PC-9 (cell line): ENCODE measurements at regions of chr22 and their contacts with region 1.

Region 1: GRCh38 chr22:30253205-30253852 is 6.8 kb upstream of the LIF start:
- DNase-seq: peak; percentile 73 to 89
- H3K4me3 ChIP-seq: peak overlapping the region; percentile 90; the same call in 1 of the 2 replicates
- H3K27ac ChIP-seq: peak overlapping the region; percentile 100
- H3K4me1 ChIP-seq: peaks cover 75% of the 10 kb centered on the region
- H3K27me3 ChIP-seq: no peaks in the 10 kb centered on the region
- CTCF ChIP-seq: no peak

Region 2: DNA sequence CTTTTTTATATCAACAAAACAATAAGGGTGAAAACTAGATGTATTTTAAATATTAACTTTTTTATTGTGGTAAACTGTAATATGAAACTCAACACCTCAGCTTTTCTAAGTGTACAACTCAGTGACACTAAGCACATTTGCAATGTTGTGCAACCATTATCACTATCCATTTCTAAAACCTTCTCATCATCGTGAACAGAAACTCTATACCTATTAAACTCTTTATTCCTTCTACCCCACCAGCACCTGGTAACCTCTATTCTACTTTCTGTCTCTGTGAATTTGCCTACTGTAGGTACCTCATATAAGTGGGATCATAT is 163.7 kb before region 1 on chr22:
- CTCF ChIA-PET with region 1: interaction called, 10 read pairs
- POLR2A ChIA-PET with region 1: no interaction called
- intact Hi-C with region 1: no loop called
- DNase-seq: no peak
- H3K4me3 ChIP-seq: no peak overlapping the region
- H3K27ac ChIP-seq: peak overlapping the region; percentile 38
- H3K4me1 ChIP-seq: peaks cover 31% of the 10 kb centered on the region
- H3K27me3 ChIP-seq: no peaks in the 10 kb centered on the region
- CTCF ChIP-seq: no peak

Region 3: DNA sequence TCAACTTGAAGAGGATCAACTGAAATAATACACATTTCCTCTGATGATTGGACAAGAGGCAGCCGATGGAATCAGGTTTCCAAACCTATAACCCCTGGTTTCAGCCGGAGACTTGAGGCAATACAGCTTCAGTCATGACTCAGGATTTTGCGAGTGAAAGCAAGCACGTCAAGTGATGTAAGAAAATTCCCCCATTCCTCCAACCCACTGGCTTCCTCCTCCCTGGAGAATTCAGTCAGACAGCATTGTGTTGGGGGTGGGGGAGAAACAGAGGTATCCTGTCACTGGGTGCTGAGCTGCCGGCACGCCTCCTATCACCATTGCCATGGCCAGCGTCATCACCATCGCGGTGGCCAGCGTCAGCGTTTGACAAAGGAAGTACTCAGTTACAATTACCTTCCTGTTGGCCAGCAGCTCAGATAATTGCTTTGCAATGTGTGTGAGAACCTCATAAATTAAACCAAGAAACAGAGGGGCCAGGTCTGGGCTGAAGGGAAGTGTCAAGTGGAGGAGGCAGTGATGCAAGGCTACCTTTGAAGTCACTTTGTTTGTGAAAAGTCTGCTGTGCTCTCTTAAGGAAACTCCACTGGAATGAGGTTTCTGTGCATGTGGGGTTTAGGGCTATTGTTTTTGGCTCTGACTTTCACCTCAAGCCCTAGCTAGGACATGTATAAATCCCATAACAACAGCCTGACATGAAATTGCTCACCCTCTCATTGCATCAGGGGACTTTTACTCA is 57.0 kb before region 1 on chr22:
- CTCF ChIA-PET with region 1: interaction called, 9 read pairs
- POLR2A ChIA-PET with region 1: no interaction called
- intact Hi-C with region 1: loop called (anchors 1 kb)
- DNase-seq: peak; percentile 88 to 100
- H3K4me3 ChIP-seq: no peak overlapping the region
- H3K27ac ChIP-seq: peak overlapping the region; percentile 99
- H3K4me1 ChIP-seq: peaks cover 71% of the 10 kb centered on the region
- H3K27me3 ChIP-seq: no peaks in the 10 kb centered on the region
- CTCF ChIP-seq: no peak

Region 4: DNA sequence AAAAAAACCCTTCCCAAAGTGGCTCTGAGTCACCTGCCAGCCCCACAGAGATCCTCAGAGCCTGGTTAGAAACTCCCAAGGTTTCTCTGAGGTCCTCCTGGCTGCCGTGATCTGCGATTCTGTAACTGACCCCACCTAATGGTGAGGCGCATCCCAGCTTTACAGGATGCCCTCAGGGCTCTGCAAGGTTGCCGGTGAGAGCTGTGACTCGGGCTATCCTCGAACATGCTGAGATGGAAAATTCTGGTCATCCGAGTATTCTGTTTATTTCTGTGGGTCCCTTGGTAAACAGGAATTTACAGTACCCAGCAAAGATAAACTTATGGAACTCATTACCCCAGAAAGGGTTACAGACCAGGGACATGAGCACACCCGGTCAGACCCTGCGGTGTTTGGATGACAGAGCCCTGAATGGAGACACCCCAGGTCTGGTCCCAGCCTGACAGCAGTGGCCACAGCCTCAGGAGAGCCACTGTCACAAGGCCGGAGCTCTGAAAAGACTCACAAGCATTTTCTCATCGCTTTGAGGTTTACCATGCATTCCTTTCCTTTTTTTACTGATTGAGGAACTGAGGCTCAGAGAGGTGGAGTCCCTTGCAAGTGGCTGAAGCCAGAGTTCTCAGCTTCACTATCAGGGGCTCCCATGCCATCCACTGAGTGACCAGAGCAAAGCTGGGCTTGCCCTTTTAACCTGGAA is 29.0 kb before region 1 on chr22:
- CTCF ChIA-PET with region 1: no interaction called
- POLR2A ChIA-PET with region 1: no interaction called
- intact Hi-C with region 1: loop called (anchors 1 kb)
- DNase-seq: peak; percentile 71 to 94
- H3K4me3 ChIP-seq: no peak overlapping the region
- H3K27ac ChIP-seq: peak overlapping the region; percentile 89
- H3K4me1 ChIP-seq: peaks cover 68% of the 10 kb centered on the region
- H3K27me3 ChIP-seq: no peaks in the 10 kb centered on the region
- CTCF ChIP-seq: no peak; the same call in 1 of the 2 replicates

Region 5: DNA sequence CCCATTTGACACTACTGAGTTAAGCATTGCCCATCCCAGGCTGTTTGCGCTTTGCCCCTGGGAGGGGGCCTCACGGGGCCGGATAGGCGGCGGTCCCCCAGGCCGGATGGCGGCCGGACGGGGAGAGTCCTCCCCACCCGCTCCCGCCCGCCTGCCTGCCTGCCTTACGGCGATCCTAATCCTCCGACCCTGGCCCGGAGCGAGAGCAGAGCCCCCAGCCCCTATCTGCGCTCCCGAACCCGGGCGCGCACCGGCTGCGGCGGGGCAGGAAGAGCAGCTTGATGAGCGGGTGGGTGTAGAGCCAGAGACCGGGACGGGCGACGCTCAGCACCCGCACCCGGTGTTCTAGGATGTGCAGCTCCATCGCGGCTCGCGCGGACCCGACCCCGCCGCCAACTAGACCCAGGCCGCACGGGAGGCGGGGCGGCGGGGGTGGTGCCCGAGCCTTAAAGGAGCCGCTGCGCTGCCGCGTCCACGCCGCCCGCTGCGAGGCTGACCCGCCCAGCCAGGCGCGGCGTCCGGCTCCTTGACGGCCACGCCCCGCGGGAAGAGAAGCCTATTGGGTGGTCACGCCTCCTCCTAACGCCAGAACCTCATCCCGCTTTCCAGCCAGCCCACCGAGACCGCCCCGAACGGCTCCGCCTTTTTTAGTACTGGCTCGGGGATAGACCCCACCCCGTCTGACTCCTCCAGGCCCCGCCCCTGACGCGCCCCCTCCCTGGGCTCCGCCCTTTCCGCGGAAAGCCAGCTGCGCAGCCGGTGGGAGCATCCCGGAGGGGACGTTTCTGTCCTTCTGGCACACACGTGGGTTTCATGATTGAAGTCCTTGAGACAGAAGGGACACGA is 36.0 kb after region 1 on chr22 and contains the start of gene CASTOR1:
- CTCF ChIA-PET with region 1: interaction called, 4 read pairs
- POLR2A ChIA-PET with region 1: no interaction called
- intact Hi-C with region 1: loop called (anchors 1 kb)
- DNase-seq: peak; percentile 85 to 94
- H3K4me3 ChIP-seq: peak within 1 kb of the TSS; percentile 87
- H3K27ac ChIP-seq: peak within 1 kb of the TSS; percentile 44
- H3K4me1 ChIP-seq: peaks cover 32% of the 10 kb centered on the region
- H3K27me3 ChIP-seq: no peaks in the 10 kb centered on the region
- CTCF ChIP-seq: no peak
- total RNA-seq, gene CASTOR1: 10.6 and 11.1 TPM in 2 replicates

Region 6: DNA sequence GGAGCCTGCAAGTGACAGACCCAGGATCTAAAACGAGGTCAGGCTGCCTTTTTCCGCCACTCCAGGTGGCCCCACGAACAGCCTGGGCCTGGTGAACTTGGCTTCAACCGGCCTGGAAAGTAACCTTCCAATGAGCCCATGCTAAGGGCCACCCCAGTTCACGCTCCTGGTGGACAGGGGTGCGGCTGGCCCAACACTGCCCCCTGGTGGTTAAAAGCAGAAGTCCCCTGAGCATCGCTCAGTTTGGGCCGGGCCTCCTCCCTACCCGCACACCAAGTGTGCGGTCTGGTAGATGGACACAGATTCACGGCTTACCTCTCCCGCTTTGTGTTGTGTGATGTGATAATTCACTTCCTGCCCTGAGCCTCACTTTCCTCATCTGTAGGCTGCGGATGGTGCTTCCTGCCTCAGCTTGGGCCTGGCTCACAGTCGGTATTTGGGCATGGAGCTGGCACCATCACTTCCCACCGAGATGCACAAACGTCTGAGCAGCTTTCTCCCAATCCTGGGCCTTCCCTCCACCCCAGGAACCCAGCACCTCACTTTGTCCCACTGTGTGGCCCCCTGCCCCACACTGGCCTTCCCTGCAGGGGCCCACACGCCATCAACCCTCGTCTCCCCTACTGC is 232.1 kb after region 1 on chr22:
- CTCF ChIA-PET with region 1: no interaction called
- POLR2A ChIA-PET with region 1: no interaction called
- intact Hi-C with region 1: loop called (anchors 1 kb)
- DNase-seq: peak; percentile 49 to 69
- H3K4me3 ChIP-seq: no peak overlapping the region
- H3K27ac ChIP-seq: no peak overlapping the region
- H3K4me1 ChIP-seq: no peaks in the 10 kb centered on the region
- H3K27me3 ChIP-seq: no peaks in the 10 kb centered on the region
- CTCF ChIP-seq: peak; percentile 99